Heart right ventricle (tissue), 16 donors: ENCODE measurements at regions of chr1 and their contacts with region 1.

Region 1: GRCh38 chr1:92934395-92935378 is 26.6 kb downstream of the DIPK1A start:
- DNase-seq: peak; percentile 40 to 75
- ATAC-seq: peak; percentile 57 to 92 (median 84)
- H3K4me3 ChIP-seq: peak overlapping the region in 4 of 10 donors; percentile 0 to 20 (median 4)
- H3K27ac ChIP-seq: peak overlapping the region in 8 of 10 donors; percentile 1 to 63 (median 48)
- H3K4me1 ChIP-seq: peaks cover 0 to 37% (median 23%) of the 10 kb centered on the region in 9 donors
- H3K27me3 ChIP-seq: no peaks in the 10 kb centered on the region
- CTCF ChIP-seq: peak in 2 of 9 donors; percentile 10 to 33

Region 2: GRCh38 chr1:92910081-92910480 is 24.6 kb before region 1 on chr1:
- intact Hi-C with region 1: loop called in 1 of 10 experiments (anchors 1 kb)
- DNase-seq: no peak
- ATAC-seq: no peak
- H3K4me3 ChIP-seq: no peak overlapping the region
- H3K27ac ChIP-seq: no peak overlapping the region
- H3K4me1 ChIP-seq: peaks cover 0 to 10% (median 0%) of the 10 kb centered on the region in 9 donors
- H3K27me3 ChIP-seq: no peaks in the 10 kb centered on the region
- CTCF ChIP-seq: no peak

Region 3: GRCh38 chr1:92994105-92994712 is 59.5 kb after region 1 on chr1:
- intact Hi-C with region 1: no loop called
- DNase-seq: peak in 1 of 2 donors; percentile 85
- ATAC-seq: peak; percentile 85 to 94 (median 91)
- H3K4me3 ChIP-seq: no peak overlapping the region
- H3K27ac ChIP-seq: peak overlapping the region in 1 of 10 donors; percentile 13
- H3K4me1 ChIP-seq: peaks cover 0 to 18% (median 0%) of the 10 kb centered on the region in 9 donors
- H3K27me3 ChIP-seq: no peaks in the 10 kb centered on the region
- CTCF ChIP-seq: peak; percentile 79 to 95 (median 87)